ENCODE measurements at regions of chr19 and their contacts with region 1.

Region 1: DNA sequence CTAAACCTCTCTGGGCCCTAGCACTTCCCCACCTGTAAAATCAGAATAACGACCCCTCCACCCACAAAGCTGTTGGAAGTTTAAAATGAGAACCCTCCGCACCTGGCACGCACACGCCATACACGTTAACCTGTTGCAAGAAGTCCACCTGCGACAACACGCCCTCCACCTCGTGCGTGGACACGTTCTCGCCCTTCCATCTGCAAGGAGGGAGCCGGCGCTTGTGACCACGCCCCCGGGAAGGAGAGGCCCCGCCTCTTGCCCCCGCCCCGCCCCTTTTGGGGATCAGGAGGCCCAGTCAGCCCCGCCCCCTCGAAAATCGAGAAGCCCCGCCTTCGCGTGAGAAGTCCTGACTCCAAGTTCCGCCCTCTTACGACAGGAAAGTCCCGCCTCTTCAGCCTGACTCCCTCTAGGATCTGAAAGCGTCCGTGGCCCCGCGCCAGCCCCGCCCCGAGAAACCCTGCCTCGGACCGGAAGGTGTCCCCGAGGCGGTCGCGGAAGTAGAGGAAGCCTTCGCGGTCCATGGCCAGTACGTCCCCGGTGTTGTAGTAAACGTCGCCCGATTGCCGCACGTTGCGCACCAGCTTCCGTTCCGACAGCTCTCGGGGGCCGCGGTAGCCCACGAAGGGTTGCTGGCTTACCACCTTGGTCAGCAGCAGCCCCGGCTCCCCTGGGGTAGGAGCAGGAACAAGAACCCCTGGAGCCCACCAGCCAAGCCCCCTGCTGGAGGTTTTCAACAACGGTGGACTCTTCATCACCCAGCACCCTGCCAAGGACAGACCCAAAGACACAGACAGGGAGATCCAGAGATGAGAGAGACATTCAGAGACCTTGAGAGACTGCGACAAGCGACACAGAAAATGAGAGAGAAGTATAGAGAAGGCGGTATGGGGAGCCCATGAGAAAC is 12.5 kb downstream of the SLC27A5 start:
- DNase-seq: peak; percentile 100
- H3K4me3 Mint-ChIP-seq: peak overlapping the region; percentile 92
- H3K27ac Mint-ChIP-seq: peak overlapping the region; percentile 81
- H3K4me1 Mint-ChIP-seq: peaks cover 23% of the 10 kb centered on the region
- H3K27me3 Mint-ChIP-seq: no peaks in the 10 kb centered on the region

Region 2: DNA sequence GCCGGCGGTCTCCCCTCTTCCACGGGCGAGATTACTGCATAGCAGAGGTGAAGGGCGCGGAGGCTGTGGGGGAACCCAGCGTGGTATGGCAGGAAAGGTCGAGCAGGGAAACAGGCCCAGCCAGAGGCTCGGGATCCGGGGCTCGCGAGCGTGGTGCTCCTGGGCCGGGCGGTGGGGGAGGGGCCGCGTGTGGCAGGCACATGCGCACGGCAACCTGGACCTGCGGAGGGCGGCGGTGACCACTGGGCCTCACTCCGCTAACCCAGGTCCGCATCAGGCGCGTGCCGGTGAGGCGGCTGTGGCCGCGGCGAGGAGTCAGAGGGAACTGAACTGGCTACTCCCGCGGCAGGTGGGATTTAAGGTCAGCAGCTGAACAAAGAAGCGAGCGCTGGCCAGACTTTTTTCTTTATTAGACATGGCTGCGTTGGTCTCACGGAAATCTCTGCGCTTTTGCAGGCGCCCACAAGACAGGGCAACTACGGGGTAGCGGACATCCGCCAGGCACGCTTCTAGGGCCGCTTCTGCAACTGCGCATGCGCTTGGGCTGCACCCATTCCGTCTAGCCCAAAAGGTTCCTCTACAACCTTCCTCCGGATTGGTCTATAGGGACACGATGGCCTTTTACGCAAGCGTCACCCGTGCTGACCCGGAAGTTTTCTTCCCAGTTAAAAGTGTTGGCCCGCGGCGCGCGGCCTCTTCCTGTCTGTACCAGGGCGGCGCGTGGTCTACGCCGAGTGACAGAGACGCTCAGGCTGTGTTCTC is 112.5 kb before region 1 on chr19 and contains the start of gene RPS5:
- CTCF ChIA-PET with region 1: no interaction called
- intact Hi-C with region 1: loop called (anchors 1 kb)
- DNase-seq: peak; percentile 97
- H3K4me3 Mint-ChIP-seq: peak within 1 kb of the TSS; percentile 91
- H3K27ac Mint-ChIP-seq: peak within 1 kb of the TSS; percentile 96
- H3K4me1 Mint-ChIP-seq: peaks cover 35% of the 10 kb centered on the region
- H3K27me3 Mint-ChIP-seq: no peaks in the 10 kb centered on the region
- total RNA-seq, gene RPS5: 1,806 to 1,853 TPM

Region 3: GRCh38 chr19:58439576-58440554 is 59.4 kb before region 1 on chr19 and contains the start of gene ZNF132:
- CTCF ChIA-PET with region 1: no interaction called
- intact Hi-C with region 1: loop called (anchors 1 kb)
- DNase-seq: peak; percentile 98
- H3K4me3 Mint-ChIP-seq: peak within 1 kb of the TSS; percentile 95
- H3K27ac Mint-ChIP-seq: peak within 1 kb of the TSS; percentile 88
- H3K4me1 Mint-ChIP-seq: peaks cover 18% of the 10 kb centered on the region
- H3K27me3 Mint-ChIP-seq: no peaks in the 10 kb centered on the region
- total RNA-seq, gene ZNF132: 2.8 to 2.9 TPM

Region 4: DNA sequence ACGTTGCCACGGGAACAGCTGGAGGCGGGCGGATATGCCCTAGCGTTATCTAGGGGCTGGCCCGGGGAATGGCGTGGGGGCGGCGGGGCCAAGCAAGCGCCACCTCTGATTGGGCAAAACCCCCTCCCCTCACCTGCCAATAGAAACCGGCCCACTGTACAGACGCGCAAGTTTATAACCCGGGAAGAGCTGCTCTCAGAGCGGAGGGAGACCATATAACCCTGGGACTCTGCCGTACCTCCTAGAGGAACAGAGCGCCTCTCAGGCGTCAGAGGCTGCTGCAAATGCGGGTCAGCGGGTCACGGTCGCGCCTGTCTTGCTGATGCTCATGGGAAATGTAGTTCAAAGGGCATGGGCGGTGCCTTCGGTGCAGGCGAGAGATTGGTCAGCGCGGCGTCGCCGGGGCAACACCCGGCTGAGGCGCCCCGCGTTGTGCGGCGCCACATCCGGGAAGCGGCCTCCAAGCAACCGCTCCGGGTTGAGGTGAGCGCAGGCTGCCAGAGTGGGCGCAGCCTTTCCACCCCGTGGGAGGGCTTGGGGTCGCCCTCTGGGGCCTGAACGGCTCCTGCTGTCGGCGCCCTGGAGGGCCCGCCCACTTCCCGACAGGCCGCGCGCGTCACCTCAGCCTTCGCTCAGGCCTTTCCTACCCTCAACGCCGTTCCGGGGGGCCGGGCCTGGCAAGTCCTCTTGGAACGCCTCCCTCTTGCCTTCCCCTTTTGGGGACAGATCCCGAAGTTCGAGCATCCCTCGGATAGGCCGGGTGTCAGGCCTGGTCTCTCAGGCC is 23.4 kb before region 1 on chr19 and contains the start of gene ZNF446:
- CTCF ChIA-PET with region 1: no interaction called
- intact Hi-C with region 1: loop called (anchors 1 kb)
- DNase-seq: peak; percentile 97
- H3K4me3 Mint-ChIP-seq: peak within 1 kb of the TSS; percentile 94
- H3K27ac Mint-ChIP-seq: peak within 1 kb of the TSS; percentile 97
- H3K4me1 Mint-ChIP-seq: peaks cover 13% of the 10 kb centered on the region
- H3K27me3 Mint-ChIP-seq: no peaks in the 10 kb centered on the region
- total RNA-seq, gene ZNF446: 2.6 to 2.9 TPM

Region 5: GRCh38 chr19:58543826-58544590 is 44.7 kb after region 1 on chr19 and contains the start of gene TRIM28:
- CTCF ChIA-PET with region 1: no interaction called
- intact Hi-C with region 1: loop called (anchors 1 kb)
- DNase-seq: peak; percentile 100
- H3K4me3 Mint-ChIP-seq: peak within 1 kb of the TSS; percentile 97
- H3K27ac Mint-ChIP-seq: peak within 1 kb of the TSS; percentile 97
- H3K4me1 Mint-ChIP-seq: peaks cover 30% of the 10 kb centered on the region
- H3K27me3 Mint-ChIP-seq: peaks cover 15% of the 10 kb centered on the region
- total RNA-seq, gene TRIM28: 475 to 483 TPM

Region 6: GRCh38 chr19:58572818-58573657 is 73.8 kb after region 1 on chr19 and contains the start of gene MZF1:
- CTCF ChIA-PET with region 1: no interaction called
- intact Hi-C with region 1: loop called (anchors 1 kb)
- DNase-seq: peak; percentile 100
- H3K4me3 Mint-ChIP-seq: peak within 1 kb of the TSS; percentile 96
- H3K27ac Mint-ChIP-seq: peak within 1 kb of the TSS; percentile 99
- H3K4me1 Mint-ChIP-seq: peaks cover 39% of the 10 kb centered on the region
- H3K27me3 Mint-ChIP-seq: no peaks in the 10 kb centered on the region
- total RNA-seq, gene MZF1: 13.3 to 13.4 TPM

Measured in activated naive CD4-positive, alpha-beta T cell treated with anti-CD3 and anti-CD28 coated beads for 36 hours (primary cell).